Endothelial cell of umbilical vein (primary cell): ENCODE measurements at regions of chr14 and their contacts with region 1.

Region 1: GRCh38 chr14:59407246-59408010 is 57.8 kb downstream of the GPR135 start:
- DNase-seq: peak; percentile 84
- H3K4me3 ChIP-seq: peak overlapping the region in 1 of 3 experiments; percentile 12
- H3K27ac ChIP-seq: peak overlapping the region; percentile 92
- H3K4me1 ChIP-seq: peaks cover 21% of the 10 kb centered on the region
- H3K27me3 ChIP-seq: no peaks in the 10 kb centered on the region
- CTCF ChIP-seq: no peak
- POLR2A ChIP-seq: no peak

Region 2: DNA sequence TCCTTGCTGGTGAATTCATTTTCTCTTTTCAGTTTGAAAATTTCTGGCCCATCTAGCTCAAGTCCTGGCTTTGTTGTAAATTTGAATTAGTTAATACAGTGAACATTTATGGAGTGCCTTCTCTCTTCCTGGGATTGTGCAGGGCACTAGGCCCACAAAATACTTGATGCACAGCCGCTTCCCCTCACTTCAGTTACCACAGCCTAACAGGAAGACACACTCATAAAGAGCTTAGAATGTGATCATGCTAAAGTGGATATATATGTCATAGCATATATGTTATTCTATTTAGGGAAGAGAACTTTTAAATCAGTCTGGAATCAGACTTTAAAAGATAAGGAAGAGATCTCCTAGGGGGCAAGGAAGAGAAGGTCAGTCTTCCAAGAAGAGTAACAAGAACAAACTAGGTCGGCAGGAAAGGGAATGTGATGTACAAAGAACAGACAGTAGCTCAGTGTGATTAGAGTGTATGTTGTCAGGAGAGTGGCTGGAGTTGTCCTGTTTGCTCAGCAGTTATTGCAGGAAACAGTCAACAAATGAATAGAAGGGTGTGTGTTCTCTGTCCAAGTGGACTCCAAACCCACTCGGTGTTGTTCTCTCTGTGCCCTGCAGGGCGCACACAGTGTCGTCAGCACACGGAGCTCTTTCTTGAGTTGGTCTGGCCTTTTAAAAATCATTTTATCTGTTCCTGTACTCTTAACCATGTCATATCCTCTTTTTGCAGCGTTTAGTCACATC is 144.5 kb before region 1 on chr14:
- CTCF ChIA-PET with region 1: no interaction called
- POLR2A ChIA-PET with region 1: no interaction called
- dilution Hi-C with region 1: no loop called
- intact Hi-C with region 1: loop called (anchors 5 kb)
- DNase-seq: peak; percentile 21
- H3K4me3 ChIP-seq: no peak overlapping the region
- H3K27ac ChIP-seq: no peak overlapping the region
- H3K4me1 ChIP-seq: peaks cover 10% of the 10 kb centered on the region
- H3K27me3 ChIP-seq: no peaks in the 10 kb centered on the region
- CTCF ChIP-seq: peak; percentile 4 to 15
- POLR2A ChIP-seq: no peak

Region 3: DNA sequence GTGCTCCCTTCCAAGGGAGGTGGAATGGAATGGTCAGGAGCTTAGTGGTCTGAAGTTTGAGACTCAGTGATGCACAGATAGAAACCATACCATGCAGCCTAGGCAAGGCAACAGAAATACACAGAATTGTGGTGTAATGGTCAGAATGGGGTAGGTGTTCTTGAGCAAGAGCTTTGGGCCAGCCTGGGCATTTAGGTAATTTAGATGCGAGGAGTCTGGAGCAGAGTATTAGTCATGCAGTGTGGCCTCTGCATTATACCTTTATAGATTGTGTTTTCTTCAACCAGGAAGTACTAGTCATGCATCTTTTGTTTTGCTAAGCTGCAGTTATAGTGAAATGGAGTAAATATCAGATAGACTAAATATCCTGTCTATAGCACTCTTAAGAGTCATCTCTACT is 100.7 kb before region 1 on chr14:
- CTCF ChIA-PET with region 1: no interaction called
- POLR2A ChIA-PET with region 1: no interaction called
- dilution Hi-C with region 1: no loop called
- intact Hi-C with region 1: loop called (anchors 1 kb)
- DNase-seq: peak; percentile 90
- H3K4me3 ChIP-seq: no peak overlapping the region
- H3K27ac ChIP-seq: peak overlapping the region; percentile 89
- H3K4me1 ChIP-seq: peaks cover 51% of the 10 kb centered on the region
- H3K27me3 ChIP-seq: no peaks in the 10 kb centered on the region
- CTCF ChIP-seq: no peak
- POLR2A ChIP-seq: peak; percentile 20

Region 4: GRCh38 chr14:59330455-59330854 is 77.0 kb before region 1 on chr14:
- CTCF ChIA-PET with region 1: interaction called, 3 read pairs
- POLR2A ChIA-PET with region 1: no interaction called
- dilution Hi-C with region 1: no loop called
- intact Hi-C with region 1: loop called (anchors 1 kb)
- DNase-seq: no peak
- H3K4me3 ChIP-seq: no peak overlapping the region
- H3K27ac ChIP-seq: no peak overlapping the region
- H3K4me1 ChIP-seq: peaks cover 33% of the 10 kb centered on the region
- H3K27me3 ChIP-seq: no peaks in the 10 kb centered on the region
- CTCF ChIP-seq: no peak
- POLR2A ChIP-seq: no peak

Region 5: GRCh38 chr14:59363531-59364226 is 43.7 kb before region 1 on chr14:
- CTCF ChIA-PET with region 1: no interaction called
- POLR2A ChIA-PET with region 1: no interaction called
- dilution Hi-C with region 1: no loop called
- intact Hi-C with region 1: loop called (anchors 2 kb)
- DNase-seq: peak; percentile 74
- H3K4me3 ChIP-seq: peak overlapping the region in 1 of 3 experiments; percentile 40
- H3K27ac ChIP-seq: peak overlapping the region; percentile 73
- H3K4me1 ChIP-seq: peaks cover 43% of the 10 kb centered on the region
- H3K27me3 ChIP-seq: no peaks in the 10 kb centered on the region
- CTCF ChIP-seq: no peak
- POLR2A ChIP-seq: no peak

Region 6: GRCh38 chr14:59438195-59438647 is 30.8 kb after region 1 on chr14:
- CTCF ChIA-PET with region 1: interaction called, 3 read pairs
- POLR2A ChIA-PET with region 1: no interaction called
- dilution Hi-C with region 1: no loop called
- intact Hi-C with region 1: loop called (anchors 1 kb)
- DNase-seq: peak; percentile 75
- H3K4me3 ChIP-seq: no peak overlapping the region
- H3K27ac ChIP-seq: peak overlapping the region; percentile 70
- H3K4me1 ChIP-seq: peaks cover 29% of the 10 kb centered on the region
- H3K27me3 ChIP-seq: no peaks in the 10 kb centered on the region
- CTCF ChIP-seq: no peak
- POLR2A ChIP-seq: no peak

Region 7: GRCh38 chr14:59464486-59465315 is 57.3 kb after region 1 on chr14:
- CTCF ChIA-PET with region 1: no interaction called
- POLR2A ChIA-PET with region 1: no interaction called
- dilution Hi-C with region 1: no loop called
- intact Hi-C with region 1: no loop called
- DNase-seq: peak; percentile 59
- H3K4me3 ChIP-seq: peak overlapping the region; percentile 18 to 48 (median 29)
- H3K27ac ChIP-seq: no peak overlapping the region
- H3K4me1 ChIP-seq: peaks cover 5% of the 10 kb centered on the region
- H3K27me3 ChIP-seq: no peaks in the 10 kb centered on the region
- CTCF ChIP-seq: no peak
- POLR2A ChIP-seq: no peak